ENCODE measurements at regions of chr18 and their contacts with region 1.

Region 1: DNA sequence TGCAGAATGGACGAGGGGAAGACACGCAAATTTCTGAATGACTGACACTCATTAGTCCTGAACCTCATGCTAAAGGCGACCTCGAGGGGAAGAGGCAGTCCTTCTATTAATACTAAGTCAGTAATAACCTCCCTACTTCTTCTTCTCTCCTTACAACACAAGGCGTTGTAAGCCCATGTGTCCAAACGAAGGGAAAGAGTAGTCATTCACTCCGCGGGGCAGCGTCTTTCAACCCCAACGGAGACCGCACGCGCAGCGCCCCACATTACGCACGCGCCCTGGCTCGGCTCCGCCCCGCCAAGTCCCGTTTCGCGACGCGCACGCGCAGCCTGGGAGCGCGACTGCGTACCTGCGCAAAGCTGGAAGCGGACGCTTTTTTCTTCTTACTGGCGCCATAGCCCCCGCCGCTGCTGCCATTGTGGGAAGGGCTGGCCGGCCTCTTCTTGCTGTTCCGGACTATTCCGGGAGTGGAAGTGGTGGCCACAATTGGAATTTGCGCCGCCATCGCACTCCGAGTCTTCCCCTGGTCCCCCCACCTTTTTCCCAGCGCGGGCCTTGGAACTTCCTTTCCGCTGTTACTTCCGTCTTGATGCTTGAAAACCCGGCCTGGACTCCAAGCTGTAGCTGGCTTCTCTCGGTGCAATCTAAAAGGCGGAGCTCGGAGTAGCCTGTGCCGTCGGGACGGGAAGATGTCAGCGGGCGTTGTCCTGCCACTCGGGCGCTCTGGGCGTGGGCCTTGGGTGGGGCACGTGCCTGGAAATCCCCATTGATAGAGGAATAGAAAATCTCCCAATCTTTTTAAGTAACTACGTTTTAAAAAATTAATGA is at the start of gene INO80C:
- DNase-seq: peak; percentile 85
- ATAC-seq: peak; percentile 92
- H3K4me3 ChIP-seq: peak within 1 kb of the TSS; percentile 80
- H3K27ac ChIP-seq: peak within 1 kb of the TSS; percentile 98
- H3K4me1 ChIP-seq: no peaks in the 10 kb centered on the region; the same call in 1 of the 2 replicates
- H3K27me3 ChIP-seq: no peaks in the 10 kb centered on the region
- CTCF ChIP-seq: no peak
- EP300 ChIP-seq: peak; percentile 4 to 62; a peak in 2 of 4 replicates
- POLR2A ChIP-seq: peak; percentile 98
- RAD21 ChIP-seq: peak; percentile 31; the same call in 1 of the 2 replicates
- polyA plus RNA-seq, gene INO80C: 25.0 to 31.6 TPM

Region 2: DNA sequence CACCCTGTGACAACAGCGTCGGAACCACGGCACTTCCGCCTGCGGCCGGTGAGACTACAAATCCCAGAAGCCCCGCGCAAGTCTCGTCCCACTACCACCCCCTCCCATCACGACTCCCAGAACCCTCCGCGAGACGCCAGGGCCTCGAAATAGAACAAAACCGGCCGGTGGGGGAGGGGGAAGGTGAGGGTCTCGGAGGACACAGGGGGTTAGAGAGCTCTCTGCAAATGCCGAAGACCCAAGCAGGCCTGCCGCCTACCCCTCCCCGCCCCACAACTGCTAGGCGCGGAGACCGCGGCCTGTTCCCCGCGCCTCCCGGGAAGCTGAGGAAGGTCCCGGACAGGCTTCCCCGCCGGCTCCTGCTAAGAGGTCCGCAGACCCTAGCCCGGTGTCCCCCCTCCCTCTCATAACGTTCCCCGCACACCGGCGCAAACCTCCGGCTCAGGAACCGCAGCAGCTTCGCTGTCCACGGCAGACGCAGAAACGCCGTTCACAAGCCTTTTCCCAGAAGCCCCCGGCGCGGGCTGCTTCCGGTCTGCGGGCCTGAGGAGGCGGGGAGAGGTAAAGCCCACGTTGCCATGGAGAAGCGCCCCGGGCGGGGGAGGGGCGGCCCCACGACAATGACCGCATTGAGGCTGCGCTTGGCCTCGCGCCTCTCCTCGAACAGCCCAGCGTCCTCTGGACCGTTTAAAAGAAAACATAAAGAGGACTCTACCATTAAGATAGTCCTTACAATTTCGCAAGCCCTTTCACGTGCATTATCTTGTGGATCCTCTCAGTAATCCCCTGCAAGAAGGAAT is 153.4 kb before region 1 on chr18 and contains the start of gene ZNF24:
- CTCF ChIA-PET with region 1: interaction called, 3 read pairs
- POLR2A ChIA-PET with region 1: no interaction called
- RAD21 ChIA-PET with region 1: no interaction called
- SMC1A ChIA-PET with region 1: no interaction called
- in situ Hi-C with region 1: no loop called
- intact Hi-C with region 1: loop called (anchors 5 kb)
- DNase-seq: peak; percentile 61
- ATAC-seq: peak; percentile 95
- H3K4me3 ChIP-seq: peak within 1 kb of the TSS; percentile 82
- H3K27ac ChIP-seq: peak within 1 kb of the TSS; percentile 98
- H3K4me1 ChIP-seq: peaks cover 7% of the 10 kb centered on the region; the same call in 1 of the 2 replicates
- H3K27me3 ChIP-seq: no peaks in the 10 kb centered on the region
- CTCF ChIP-seq: no peak
- EP300 ChIP-seq: 0 out of 4 replicates have a peak, but pooled peaks of 1 of the 2 experiments have one; percentile 21
- POLR2A ChIP-seq: peak; percentile 91
- RAD21 ChIP-seq: no peak
- polyA plus RNA-seq, gene ZNF24: 19.3 to 41.6 TPM

Region 3: DNA sequence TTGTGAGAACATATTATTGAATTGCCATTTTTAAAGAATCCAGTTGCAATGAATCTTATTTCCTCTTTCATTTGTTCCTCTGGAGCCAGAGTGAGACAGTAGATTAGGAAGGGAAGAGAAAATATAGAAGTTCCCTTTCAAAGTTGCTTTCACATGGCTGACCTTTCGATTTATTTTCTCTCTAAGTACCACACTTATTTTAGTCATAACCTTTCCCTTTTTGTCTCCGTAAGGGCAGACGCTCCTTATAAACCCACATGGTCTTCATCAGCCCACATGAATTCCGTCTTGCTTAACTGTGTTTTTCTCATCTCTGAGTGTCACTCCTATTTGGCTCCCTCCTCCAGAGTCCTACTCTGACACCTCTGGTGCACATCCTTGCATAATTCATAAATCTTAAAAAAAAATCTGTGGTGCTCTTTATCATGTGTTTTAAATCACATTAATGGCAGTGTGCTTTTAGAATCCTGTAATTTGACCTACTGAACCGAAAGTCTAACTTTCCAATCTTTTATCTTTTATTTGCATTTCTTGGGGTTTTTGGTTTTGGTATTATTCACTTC is 82.0 kb before region 1 on chr18:
- CTCF ChIA-PET with region 1: interaction called, 4 read pairs
- POLR2A ChIA-PET with region 1: interaction called, 4 read pairs
- RAD21 ChIA-PET with region 1: interaction called, 5 read pairs
- SMC1A ChIA-PET with region 1: interaction called, 18 read pairs
- in situ Hi-C with region 1: no loop called
- intact Hi-C with region 1: no loop called
- DNase-seq: no peak
- ATAC-seq: peak; percentile 71
- H3K4me3 ChIP-seq: peak overlapping the region; percentile 8; the same call in 1 of the 2 replicates
- H3K27ac ChIP-seq: peak overlapping the region; percentile 51
- H3K4me1 ChIP-seq: peaks cover 27% of the 10 kb centered on the region
- H3K27me3 ChIP-seq: no peaks in the 10 kb centered on the region
- CTCF ChIP-seq: no peak
- EP300 ChIP-seq: no peak
- POLR2A ChIP-seq: no peak
- RAD21 ChIP-seq: no peak

Region 4: GRCh38 chr18:35451020-35451419 is 46.6 kb before region 1 on chr18:
- CTCF ChIA-PET with region 1: no interaction called
- POLR2A ChIA-PET with region 1: no interaction called
- RAD21 ChIA-PET with region 1: no interaction called
- SMC1A ChIA-PET with region 1: no interaction called
- in situ Hi-C with region 1: no loop called
- intact Hi-C with region 1: no loop called
- DNase-seq: no peak
- ATAC-seq: no peak
- H3K4me3 ChIP-seq: no peak overlapping the region
- H3K27ac ChIP-seq: no peak overlapping the region
- H3K4me1 ChIP-seq: no peaks in the 10 kb centered on the region
- H3K27me3 ChIP-seq: no peaks in the 10 kb centered on the region
- CTCF ChIP-seq: no peak
- EP300 ChIP-seq: no peak
- POLR2A ChIP-seq: no peak
- RAD21 ChIP-seq: no peak

Region 5: DNA sequence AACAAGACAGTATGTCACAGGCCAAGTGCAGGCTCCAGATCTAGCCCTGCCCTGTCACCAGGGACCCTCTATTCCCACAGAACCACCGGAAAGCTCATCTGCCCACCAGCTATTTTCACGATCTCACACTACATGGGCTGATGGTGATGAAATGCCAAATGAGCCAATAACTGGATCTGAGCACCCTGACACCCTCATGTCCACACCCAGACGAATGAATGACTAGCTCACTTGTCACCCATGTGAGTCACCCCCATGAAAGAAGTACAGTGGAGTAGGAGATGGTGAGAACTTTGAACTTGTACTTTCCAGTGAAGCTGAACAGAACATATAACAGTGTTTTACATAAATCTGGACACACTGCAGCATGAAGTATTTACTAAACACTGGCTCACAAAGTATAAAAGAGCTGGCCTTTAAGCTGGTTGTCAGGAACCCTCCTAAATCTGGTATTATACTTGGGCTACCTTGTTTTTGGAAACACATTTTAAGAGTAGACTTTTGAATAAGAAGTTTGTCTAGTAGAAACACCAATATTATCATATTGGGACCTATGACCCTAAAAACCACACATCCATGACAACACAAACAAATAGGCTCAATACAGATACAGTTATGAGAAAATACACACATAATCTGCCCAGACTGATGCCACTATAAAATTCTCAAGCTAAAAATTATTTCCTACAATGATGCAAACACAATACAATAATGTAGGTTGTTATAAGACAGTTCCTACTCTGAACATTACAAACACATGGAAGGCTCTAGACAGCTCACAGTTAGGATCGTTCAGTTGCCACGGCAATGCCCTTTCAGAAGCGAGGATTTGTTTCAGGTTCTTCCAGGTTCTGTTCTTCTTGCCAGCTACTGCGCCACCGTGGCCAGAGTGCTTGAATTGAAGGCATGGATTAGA is 18.8 kb before region 1 on chr18:
- CTCF ChIA-PET with region 1: interaction called, 12 read pairs
- POLR2A ChIA-PET with region 1: interaction called, 106 read pairs
- RAD21 ChIA-PET with region 1: interaction called, 57 read pairs
- SMC1A ChIA-PET with region 1: interaction called, 122 read pairs
- in situ Hi-C with region 1: no loop called
- intact Hi-C with region 1: no loop called
- DNase-seq: no peak
- ATAC-seq: peak; percentile 88
- H3K4me3 ChIP-seq: no peak overlapping the region
- H3K27ac ChIP-seq: no peak overlapping the region
- H3K4me1 ChIP-seq: no peaks in the 10 kb centered on the region
- H3K27me3 ChIP-seq: no peaks in the 10 kb centered on the region
- CTCF ChIP-seq: no peak
- EP300 ChIP-seq: no peak
- POLR2A ChIP-seq: no peak
- RAD21 ChIP-seq: no peak

Region 6: GRCh38 chr18:35513181-35513936 is 15.8 kb after region 1 on chr18:
- CTCF ChIA-PET with region 1: interaction called, 21 read pairs
- POLR2A ChIA-PET with region 1: interaction called, 15 read pairs
- RAD21 ChIA-PET with region 1: interaction called, 9 read pairs
- SMC1A ChIA-PET with region 1: interaction called, 39 read pairs
- in situ Hi-C with region 1: no loop called
- intact Hi-C with region 1: no loop called
- DNase-seq: no peak
- ATAC-seq: no peak
- H3K4me3 ChIP-seq: no peak overlapping the region
- H3K27ac ChIP-seq: no peak overlapping the region
- H3K4me1 ChIP-seq: peaks cover 8% of the 10 kb centered on the region
- H3K27me3 ChIP-seq: no peaks in the 10 kb centered on the region
- CTCF ChIP-seq: no peak
- EP300 ChIP-seq: no peak
- POLR2A ChIP-seq: no peak
- RAD21 ChIP-seq: no peak

Region 7: DNA sequence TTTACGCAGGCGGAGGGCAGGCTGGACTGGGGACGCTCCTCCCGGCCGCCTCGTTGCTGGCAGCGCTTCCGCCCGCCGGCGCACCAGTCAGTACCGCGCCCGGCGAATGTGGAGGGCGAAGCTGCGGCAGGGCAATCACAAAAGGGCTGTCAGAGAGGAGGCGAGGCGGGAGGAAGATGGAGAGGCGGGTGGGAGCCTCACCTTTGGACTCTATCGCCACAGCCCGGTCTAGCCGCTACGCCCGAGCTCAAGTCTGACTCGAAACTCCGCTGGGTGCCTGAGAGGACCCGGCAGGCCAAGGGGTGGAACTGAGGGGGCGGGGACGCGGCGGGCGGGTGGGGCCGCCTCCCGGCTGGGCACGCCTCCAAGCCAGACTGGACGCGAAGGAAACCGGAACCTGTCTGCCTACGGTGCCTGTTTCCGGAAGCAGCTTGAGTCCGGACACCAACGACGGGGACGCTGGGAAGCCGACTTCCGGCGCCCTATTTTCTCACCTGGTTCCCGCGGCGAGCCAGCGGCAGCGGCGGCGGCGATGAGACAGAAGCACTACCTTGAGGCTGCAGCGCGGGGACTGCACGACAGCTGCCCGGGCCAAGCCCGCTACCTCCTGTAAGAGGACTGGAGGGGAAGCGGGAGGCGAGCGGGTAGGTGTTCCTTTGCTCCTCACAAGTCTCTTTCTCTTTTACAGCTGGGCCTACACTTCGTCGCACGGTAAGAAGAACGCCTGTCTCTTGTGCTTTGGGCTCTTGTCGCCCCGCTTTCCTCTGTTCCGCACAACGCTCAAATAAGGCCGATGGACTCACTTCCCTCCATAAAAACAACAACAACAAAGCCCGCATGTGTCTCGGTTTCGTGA is 474.8 kb after region 1 on chr18 and contains the start of gene RMP24:
- CTCF ChIA-PET with region 1: no interaction called
- POLR2A ChIA-PET with region 1: no interaction called
- RAD21 ChIA-PET with region 1: no interaction called
- SMC1A ChIA-PET with region 1: no interaction called
- in situ Hi-C with region 1: no loop called
- intact Hi-C with region 1: loop called (anchors 5 kb)
- DNase-seq: peak; percentile 84
- ATAC-seq: peak; percentile 95
- H3K4me3 ChIP-seq: peak within 1 kb of the TSS; percentile 94
- H3K27ac ChIP-seq: peak within 1 kb of the TSS; percentile 69
- H3K4me1 ChIP-seq: peaks cover 21% of the 10 kb centered on the region
- H3K27me3 ChIP-seq: no peaks in the 10 kb centered on the region
- CTCF ChIP-seq: no peak
- EP300 ChIP-seq: peak in 1 of 2 experiments; percentile 44; a peak in 1 of 4 replicates
- POLR2A ChIP-seq: peak; percentile 97
- RAD21 ChIP-seq: no peak